ENCODE measurements at regions of chr19 and their contacts with region 1.

Region 1: GRCh38 chr19:49929611-49930482 is 543 bp upstream of the NUP62 start:
- DNase-seq: peak; percentile 88
- ATAC-seq: peak; percentile 84
- H3K4me3 ChIP-seq: peak overlapping the region; percentile 71 to 95 (median 89)
- H3K27ac ChIP-seq: peak overlapping the region; percentile 94
- H3K4me1 ChIP-seq: peaks cover 27% of the 10 kb centered on the region
- H3K27me3 ChIP-seq: no peaks in the 10 kb centered on the region; a peak in 1 of 5 replicates
- CTCF ChIP-seq: no peak
- EP300 ChIP-seq: no peak
- POLR2A ChIP-seq: peak; percentile 96 to 99
- RAD21 ChIP-seq: peak; percentile 24; the same call in 1 of the 2 replicates

Region 2: DNA sequence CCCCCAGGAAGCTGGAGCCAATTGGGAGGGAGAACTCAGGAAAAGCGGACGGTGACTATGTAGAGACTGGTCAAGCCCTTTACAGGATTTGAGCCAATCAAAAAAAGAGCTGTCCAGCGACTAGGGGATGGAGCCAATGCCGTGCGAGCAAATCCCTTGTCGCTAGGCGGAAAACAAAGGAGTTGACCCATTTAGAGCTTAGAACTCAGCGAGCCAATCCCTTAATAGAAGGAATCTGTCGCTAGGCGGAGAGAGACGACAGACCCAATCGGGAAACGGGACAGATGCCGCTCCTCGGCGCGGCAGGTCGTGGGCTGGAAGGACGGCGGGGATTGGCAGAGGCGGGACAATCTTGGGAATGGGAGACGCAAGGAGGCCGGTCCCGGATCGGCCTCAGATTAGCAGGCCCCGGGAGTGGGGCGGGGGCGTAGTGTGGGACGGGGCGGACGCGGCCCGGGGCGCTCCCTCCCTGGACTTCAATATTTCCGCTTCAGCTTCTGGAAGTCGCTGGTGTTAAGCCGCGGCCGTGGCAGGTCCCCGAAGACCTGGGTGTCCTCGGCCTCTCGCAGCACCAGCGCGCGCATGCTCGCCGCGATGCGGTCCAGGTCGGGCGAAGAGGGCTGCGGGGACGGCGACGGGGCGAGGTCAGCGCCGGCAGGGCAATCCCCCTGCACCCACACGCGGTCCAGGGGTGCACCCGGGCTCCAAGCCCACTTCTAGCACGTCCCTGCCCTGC is 60.2 kb before region 1 on chr19:
- CTCF ChIA-PET with region 1: no interaction called
- POLR2A ChIA-PET with region 1: interaction called, 22 read pairs
- in situ Hi-C with region 1: no loop called
- intact Hi-C with region 1: no loop called
- DNase-seq: peak; percentile 99
- ATAC-seq: peak; percentile 82
- H3K4me3 ChIP-seq: peak overlapping the region; percentile 45 to 78 (median 67)
- H3K27ac ChIP-seq: peak overlapping the region; percentile 78
- H3K4me1 ChIP-seq: peaks cover 49% of the 10 kb centered on the region
- H3K27me3 ChIP-seq: no peaks in the 10 kb centered on the region; a peak in 1 of 5 replicates
- CTCF ChIP-seq: no peak
- EP300 ChIP-seq: peak in 1 of 2 experiments; percentile 91; a peak in 2 of 4 replicates
- POLR2A ChIP-seq: peak; percentile 13 to 63; a peak in 2 of 4 replicates
- RAD21 ChIP-seq: peak; percentile 58; the same call in 1 of the 2 replicates

Region 3: DNA sequence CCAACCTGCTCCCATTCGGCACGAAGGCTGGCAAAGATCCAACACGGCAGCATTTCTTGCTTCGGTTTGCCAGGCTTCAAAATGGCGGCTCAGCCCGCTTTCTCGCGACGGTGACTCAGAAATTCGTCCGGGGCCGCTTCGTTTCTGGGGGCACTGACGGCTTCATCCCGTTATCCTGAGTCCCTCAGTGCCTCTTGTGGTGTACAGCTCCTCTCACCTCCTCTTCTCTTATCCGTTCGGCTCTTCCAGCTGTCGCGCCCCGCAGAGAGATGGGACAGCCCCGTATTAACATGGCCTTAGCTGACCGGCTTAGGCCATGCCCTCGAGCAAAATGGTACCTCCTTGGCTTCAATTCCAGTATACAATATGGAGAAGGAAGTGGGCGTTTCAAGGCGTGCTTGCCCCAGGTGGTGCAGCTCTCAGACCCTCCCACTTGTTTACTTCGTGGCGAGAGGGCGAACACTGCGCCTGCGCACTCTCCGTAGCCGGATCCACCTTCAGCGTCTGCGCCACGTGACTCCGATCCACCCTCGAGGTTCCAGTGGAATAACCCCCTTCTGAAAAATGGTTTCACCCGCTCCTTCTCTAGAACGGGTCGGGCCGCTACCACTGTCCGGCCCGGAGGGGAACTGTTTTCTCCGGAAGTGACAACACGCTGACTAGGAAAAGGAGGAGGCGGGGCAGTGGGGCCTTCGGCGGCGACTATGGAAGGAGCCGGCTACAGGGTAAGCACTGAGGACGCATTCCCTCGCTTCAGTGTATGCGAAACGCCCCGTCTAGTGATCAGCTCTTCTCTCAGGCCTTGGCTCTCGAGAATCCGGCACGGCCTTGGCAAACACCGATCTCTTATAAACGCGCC is 52.6 kb before region 1 on chr19 and contains the starts of genes AKT1S1 and TBC1D17:
- CTCF ChIA-PET with region 1: no interaction called
- POLR2A ChIA-PET with region 1: interaction called, 20 read pairs
- in situ Hi-C with region 1: no loop called
- intact Hi-C with region 1: no loop called
- DNase-seq: peak; percentile 99
- ATAC-seq: peak; percentile 80
- H3K4me3 ChIP-seq: peak within 1 kb of the TSS; percentile 77 to 99 (median 97)
- H3K27ac ChIP-seq: peak within 1 kb of the TSS; percentile 99
- H3K4me1 ChIP-seq: peaks cover 31% of the 10 kb centered on the region
- H3K27me3 ChIP-seq: no peaks in the 10 kb centered on the region; a peak in 1 of 5 replicates
- CTCF ChIP-seq: no peak
- EP300 ChIP-seq: no peak; a peak in 1 of 4 replicates
- POLR2A ChIP-seq: peak; percentile 53 to 86
- RAD21 ChIP-seq: peak; percentile 20; the same call in 1 of the 2 replicates
- total RNA-seq, gene AKT1S1: 10.9 and 13.5 TPM in 2 replicates
- total RNA-seq, gene TBC1D17: 3.6 and 9.7 TPM in 2 replicates

Region 4: DNA sequence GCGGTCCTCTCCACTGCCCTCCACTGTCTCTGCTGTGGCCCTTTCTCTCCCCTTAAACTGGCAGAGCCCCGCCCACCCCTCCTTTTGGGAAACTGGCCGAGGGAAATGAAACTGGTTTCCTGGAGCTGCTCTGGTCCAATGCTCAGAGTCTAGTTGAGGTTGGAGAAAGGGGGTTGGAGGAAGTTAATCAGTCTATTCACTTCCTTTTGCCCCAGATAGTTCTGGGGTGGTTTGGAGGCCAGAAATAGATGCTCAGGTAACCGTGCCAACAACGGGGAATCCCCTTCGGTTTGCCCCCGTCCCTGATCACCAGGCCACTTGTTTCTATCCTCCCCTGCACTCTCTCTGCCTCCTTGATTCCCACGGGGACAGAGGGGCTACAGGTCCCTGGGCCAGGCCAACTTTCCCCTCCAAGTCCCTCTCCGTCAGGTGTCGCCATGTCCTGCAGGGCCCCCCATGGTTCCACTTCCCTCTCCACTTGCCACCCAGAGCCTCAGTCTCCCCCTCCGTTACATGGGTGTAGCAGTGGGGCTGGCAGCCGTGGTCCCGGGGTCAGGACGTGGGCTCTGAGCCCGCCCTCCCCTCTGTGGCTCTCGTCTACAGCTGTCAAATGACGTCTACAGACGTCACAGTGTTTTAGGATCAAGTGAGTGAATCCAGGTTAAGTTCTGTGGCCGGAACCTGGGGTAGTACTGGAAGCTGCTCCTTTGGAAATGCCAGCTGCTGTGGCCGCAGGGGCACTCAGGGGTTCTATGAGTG is 32.8 kb before region 1 on chr19 and contains the start of gene IL4I1:
- CTCF ChIA-PET with region 1: no interaction called
- POLR2A ChIA-PET with region 1: no interaction called
- in situ Hi-C with region 1: no loop called
- intact Hi-C with region 1: no loop called
- DNase-seq: no peak
- ATAC-seq: no peak
- H3K4me3 ChIP-seq: peak within 1 kb of the TSS in 1 of 3 experiments; percentile 10; a peak in 1 of 6 replicates
- H3K27ac ChIP-seq: no peak within 1 kb of the TSS
- H3K4me1 ChIP-seq: peaks cover 18% of the 10 kb centered on the region
- H3K27me3 ChIP-seq: peaks cover 9 to 17% of the 10 kb centered on the region in 2 experiments; a peak in 4 of 5 replicates
- CTCF ChIP-seq: no peak
- EP300 ChIP-seq: no peak
- POLR2A ChIP-seq: no peak
- RAD21 ChIP-seq: no peak
- total RNA-seq, gene IL4I1: not detected in 2 replicates

Region 5: GRCh38 chr19:49912965-49913685 is 16.7 kb before region 1 on chr19:
- CTCF ChIA-PET with region 1: no interaction called
- POLR2A ChIA-PET with region 1: interaction called, 17 read pairs
- in situ Hi-C with region 1: no loop called
- intact Hi-C with region 1: no loop called
- DNase-seq: peak; percentile 44
- ATAC-seq: peak; percentile 75
- H3K4me3 ChIP-seq: no peak overlapping the region
- H3K27ac ChIP-seq: peak overlapping the region; percentile 57
- H3K4me1 ChIP-seq: peaks cover 24% of the 10 kb centered on the region
- H3K27me3 ChIP-seq: no peaks in the 10 kb centered on the region
- CTCF ChIP-seq: peak; percentile 61
- EP300 ChIP-seq: no peak
- POLR2A ChIP-seq: peak in 1 of 2 experiments; percentile 27; a peak in 1 of 4 replicates
- RAD21 ChIP-seq: no peak

Region 6: DNA sequence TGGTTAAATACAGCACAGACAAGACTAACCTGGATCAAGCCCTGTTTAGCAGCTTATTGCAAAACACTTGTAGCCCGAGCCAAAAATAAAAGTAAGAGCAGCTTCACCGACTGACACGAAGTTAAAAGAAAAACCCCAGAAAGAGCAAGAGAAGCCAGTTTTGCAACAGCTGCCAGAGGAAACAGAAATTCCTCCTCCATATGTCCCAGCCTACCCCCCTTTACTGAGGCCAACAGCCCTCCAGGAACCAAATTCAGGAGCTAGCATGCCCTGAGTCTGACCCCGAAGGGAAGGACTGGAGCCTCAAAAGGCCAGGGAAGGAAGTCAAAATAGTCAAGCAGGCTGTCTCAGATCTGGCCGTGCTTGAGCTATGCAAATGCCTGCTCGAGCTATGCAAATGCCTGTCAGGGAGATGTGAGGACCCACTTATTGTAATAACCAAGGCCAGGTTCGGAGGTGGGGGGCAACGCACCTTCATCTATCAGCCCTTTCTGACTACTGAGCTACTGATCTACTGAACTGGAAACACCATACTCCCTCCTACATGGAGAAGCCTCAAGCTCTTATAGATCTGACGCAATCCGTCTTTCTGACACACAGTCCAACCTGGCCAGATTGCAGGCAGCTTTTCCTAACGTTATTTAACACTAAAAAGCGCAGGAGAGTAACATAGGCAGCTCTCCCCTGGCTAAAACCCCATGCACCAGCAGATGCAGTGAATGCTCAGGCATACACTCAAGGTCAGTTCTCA is 24.4 kb after region 1 on chr19:
- CTCF ChIA-PET with region 1: no interaction called
- POLR2A ChIA-PET with region 1: interaction called, 17 read pairs
- in situ Hi-C with region 1: no loop called
- intact Hi-C with region 1: no loop called
- DNase-seq: peak; percentile 14
- ATAC-seq: peak; percentile 19; the same call in 1 of the 3 replicates
- H3K4me3 ChIP-seq: peak overlapping the region in 2 of 3 experiments; percentile 0 to 31; a peak in 1 of 6 replicates
- H3K27ac ChIP-seq: no peak overlapping the region
- H3K4me1 ChIP-seq: peaks cover 64% of the 10 kb centered on the region
- H3K27me3 ChIP-seq: peaks cover 0 to 36% of the 10 kb centered on the region in 2 experiments; a peak in 3 of 5 replicates
- CTCF ChIP-seq: no peak
- EP300 ChIP-seq: no peak
- POLR2A ChIP-seq: no peak
- RAD21 ChIP-seq: no peak

Measured in HepG2 (cell line).